ENCODE measurements at regions of chr6 and their contacts with region 1.

Region 1: GRCh38 chr6:14066782-14067406 is 50.7 kb upstream of the CD83 start:
- DNase-seq: peak; percentile 82
- H3K4me3 Mint-ChIP-seq: no peak overlapping the region
- H3K27ac Mint-ChIP-seq: no peak overlapping the region
- H3K4me1 Mint-ChIP-seq: peaks cover 17% of the 10 kb centered on the region
- H3K27me3 Mint-ChIP-seq: no peaks in the 10 kb centered on the region
- CTCF ChIP-seq: peak; percentile 44

Region 2: GRCh38 chr6:13336553-13336952 is 730.3 kb before region 1 on chr6:
- CTCF ChIA-PET with region 1: interaction called, 4 read pairs
- POLR2A ChIA-PET with region 1: no interaction called
- intact Hi-C with region 1: loop called (anchors 5 kb)
- DNase-seq: peak; percentile 81
- H3K4me3 Mint-ChIP-seq: no peak overlapping the region
- H3K27ac Mint-ChIP-seq: no peak overlapping the region
- H3K4me1 Mint-ChIP-seq: peaks cover 5% of the 10 kb centered on the region
- H3K27me3 Mint-ChIP-seq: no peaks in the 10 kb centered on the region
- CTCF ChIP-seq: peak; percentile 90

Region 3: GRCh38 chr6:13873285-13874190 is 193.4 kb before region 1 on chr6:
- CTCF ChIA-PET with region 1: interaction called, 11 read pairs
- POLR2A ChIA-PET with region 1: interaction called, 3 read pairs
- intact Hi-C with region 1: no loop called
- DNase-seq: peak; percentile 64
- H3K4me3 Mint-ChIP-seq: peak overlapping the region; percentile 80
- H3K27ac Mint-ChIP-seq: peak overlapping the region; percentile 77
- H3K4me1 Mint-ChIP-seq: peaks cover 12% of the 10 kb centered on the region
- H3K27me3 Mint-ChIP-seq: no peaks in the 10 kb centered on the region
- CTCF ChIP-seq: peak; percentile 88

Region 4: GRCh38 chr6:13908955-13909381 is 157.9 kb before region 1 on chr6:
- CTCF ChIA-PET with region 1: interaction called, 259 read pairs
- POLR2A ChIA-PET with region 1: interaction called, 9 read pairs
- intact Hi-C with region 1: loop called (anchors 1 kb)
- DNase-seq: peak; percentile 74
- H3K4me3 Mint-ChIP-seq: no peak overlapping the region
- H3K27ac Mint-ChIP-seq: no peak overlapping the region
- H3K4me1 Mint-ChIP-seq: peaks cover 8% of the 10 kb centered on the region
- H3K27me3 Mint-ChIP-seq: peaks cover 28% of the 10 kb centered on the region
- CTCF ChIP-seq: peak; percentile 74

Region 5: DNA sequence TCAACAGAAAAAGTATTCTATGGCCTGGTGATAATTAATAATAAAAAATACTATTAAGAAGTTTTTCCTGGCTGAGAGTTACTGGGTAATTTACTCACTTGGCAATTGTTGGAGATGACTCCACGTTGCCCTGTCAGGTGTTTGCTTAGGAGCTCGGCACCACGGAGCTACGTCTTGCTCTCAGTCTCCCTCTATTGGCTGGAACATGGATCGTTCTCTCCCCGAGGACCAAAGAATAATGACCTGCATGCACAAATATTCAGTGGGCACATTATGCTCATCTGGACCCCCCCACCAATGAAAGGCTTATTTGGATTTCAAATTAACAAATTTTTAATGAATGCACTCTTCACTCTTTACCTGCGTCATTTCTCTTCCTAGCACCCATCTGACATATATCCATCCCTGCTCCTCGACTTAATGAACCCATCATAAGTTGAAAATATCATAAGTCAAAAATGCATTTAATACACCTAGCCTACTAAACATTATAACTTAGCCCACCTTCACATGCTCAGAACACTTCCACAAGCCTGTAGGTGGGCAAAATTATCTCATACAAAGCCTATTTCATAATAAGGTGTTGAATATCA is 20.3 kb before region 1 on chr6:
- CTCF ChIA-PET with region 1: interaction called, 46 read pairs
- POLR2A ChIA-PET with region 1: no interaction called
- intact Hi-C with region 1: no loop called
- DNase-seq: peak; percentile 62
- H3K4me3 Mint-ChIP-seq: no peak overlapping the region
- H3K27ac Mint-ChIP-seq: no peak overlapping the region
- H3K4me1 Mint-ChIP-seq: no peaks in the 10 kb centered on the region
- H3K27me3 Mint-ChIP-seq: peaks cover 32% of the 10 kb centered on the region
- CTCF ChIP-seq: peak; percentile 67